A673 (cell line): ENCODE measurements at regions of chr11 and their contacts with region 1.

Region 1: DNA sequence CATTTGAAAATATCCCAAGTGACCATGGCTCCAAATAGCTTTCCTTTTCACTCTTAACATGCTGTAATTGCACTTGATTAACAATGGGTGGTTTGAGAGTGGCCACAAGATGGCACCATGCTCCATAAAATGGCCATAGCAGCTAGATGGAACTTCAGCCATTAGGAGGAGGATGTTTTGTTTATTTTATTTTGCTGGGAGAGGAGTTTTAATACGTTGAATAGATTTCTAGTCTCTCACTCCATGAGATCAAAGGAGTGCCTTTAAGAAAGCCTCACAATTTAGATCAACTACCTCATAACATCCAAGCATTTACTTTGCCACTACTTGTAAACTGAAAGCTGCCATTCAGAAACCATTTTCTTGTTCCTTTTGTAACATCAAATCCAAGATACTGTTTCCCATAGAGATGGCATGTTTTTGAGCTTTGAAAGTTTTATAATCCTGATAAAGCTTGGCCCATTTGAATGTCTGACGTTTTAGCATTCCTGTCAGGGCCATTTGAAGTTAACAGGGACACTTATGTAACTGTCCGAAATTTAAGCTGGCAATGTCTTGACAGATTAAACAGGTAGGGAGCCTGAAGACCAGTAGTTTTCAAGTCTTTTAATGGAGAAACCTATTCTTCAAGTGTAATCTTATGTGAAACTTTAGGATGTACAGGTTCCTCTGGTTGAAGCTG is 4.7 kb downstream of the FEN1 start:
- DNase-seq: peak; percentile 88
- H3K4me3 ChIP-seq: no peak overlapping the region
- H3K27ac ChIP-seq: peak overlapping the region; percentile 62
- H3K4me1 ChIP-seq: peaks cover 14% of the 10 kb centered on the region
- H3K27me3 ChIP-seq: no peaks in the 10 kb centered on the region
- CTCF ChIP-seq: peak; percentile 96

Region 2: DNA sequence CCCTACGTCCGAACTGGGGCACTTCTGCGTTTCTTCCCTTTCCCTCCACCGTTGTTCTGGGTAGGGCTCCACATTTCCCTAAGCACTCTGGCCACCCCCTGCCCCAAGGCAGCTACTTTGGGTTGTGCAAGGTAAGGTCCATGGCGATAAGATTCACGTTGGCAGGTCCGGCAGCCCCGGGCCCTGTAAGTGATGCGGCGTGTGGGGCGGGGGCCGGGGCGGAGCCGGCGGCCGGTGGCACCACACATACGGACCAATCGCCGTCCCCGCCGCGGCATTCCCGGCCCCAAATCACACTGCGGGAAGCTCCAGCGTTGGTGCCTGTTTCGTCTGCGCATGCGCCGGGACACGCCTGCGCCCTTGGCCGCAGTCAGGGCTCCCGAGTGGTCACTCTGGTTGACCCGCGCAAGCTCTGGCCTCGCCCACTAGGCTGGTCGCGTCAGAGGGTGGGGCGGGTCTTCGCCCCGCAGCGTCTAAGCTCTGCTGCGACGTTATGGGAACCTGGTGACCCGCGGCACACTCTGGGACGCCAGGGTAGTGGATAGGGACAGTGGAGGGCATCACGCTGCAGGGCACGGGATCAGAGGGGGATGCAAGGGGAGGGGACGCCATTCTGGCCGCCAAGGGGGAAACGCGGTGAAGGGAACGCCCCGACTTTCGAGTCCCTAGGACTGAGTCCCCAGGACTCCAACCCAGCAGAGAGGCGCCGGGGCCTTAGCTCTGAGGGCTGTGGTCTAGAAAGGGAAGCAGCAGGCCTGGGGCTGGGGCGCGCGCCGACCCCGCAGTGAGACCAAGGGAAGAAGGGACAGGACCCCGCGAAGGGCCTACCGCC is 17.8 kb after region 1 on chr11:
- CTCF ChIA-PET with region 1: interaction called, 12 read pairs
- POLR2A ChIA-PET with region 1: no interaction called
- intact Hi-C with region 1: no loop called
- DNase-seq: peak; percentile 93
- H3K4me3 ChIP-seq: peak overlapping the region; percentile 78
- H3K27ac ChIP-seq: peak overlapping the region; percentile 96
- H3K4me1 ChIP-seq: peaks cover 34% of the 10 kb centered on the region
- H3K27me3 ChIP-seq: no peaks in the 10 kb centered on the region
- CTCF ChIP-seq: no peak

Region 3: GRCh38 chr11:61899146-61899841 is 101.9 kb after region 1 on chr11:
- CTCF ChIA-PET with region 1: interaction called, 12 read pairs
- POLR2A ChIA-PET with region 1: no interaction called
- intact Hi-C with region 1: loop called (anchors 5 kb)
- DNase-seq: peak; percentile 91
- H3K4me3 ChIP-seq: no peak overlapping the region
- H3K27ac ChIP-seq: peak overlapping the region; percentile 48
- H3K4me1 ChIP-seq: peaks cover 5% of the 10 kb centered on the region
- H3K27me3 ChIP-seq: no peaks in the 10 kb centered on the region
- CTCF ChIP-seq: peak; percentile 100

Region 4: GRCh38 chr11:62081378-62082291 is 284.2 kb after region 1 on chr11:
- CTCF ChIA-PET with region 1: interaction called, 10 read pairs
- POLR2A ChIA-PET with region 1: no interaction called
- intact Hi-C with region 1: no loop called
- DNase-seq: peak; percentile 74
- H3K4me3 ChIP-seq: no peak overlapping the region
- H3K27ac ChIP-seq: no peak overlapping the region
- H3K4me1 ChIP-seq: peaks cover 6% of the 10 kb centered on the region
- H3K27me3 ChIP-seq: no peaks in the 10 kb centered on the region
- CTCF ChIP-seq: peak; percentile 97

Region 5: GRCh38 chr11:62108017-62108750 is 310.8 kb after region 1 on chr11:
- CTCF ChIA-PET with region 1: interaction called, 10 read pairs
- POLR2A ChIA-PET with region 1: no interaction called
- intact Hi-C with region 1: loop called (anchors 2 kb)
- DNase-seq: peak; percentile 84
- H3K4me3 ChIP-seq: no peak overlapping the region
- H3K27ac ChIP-seq: no peak overlapping the region
- H3K4me1 ChIP-seq: peaks cover 3% of the 10 kb centered on the region
- H3K27me3 ChIP-seq: no peaks in the 10 kb centered on the region
- CTCF ChIP-seq: peak; percentile 91